GM18951 (cell line): ENCODE measurements at regions of chr2 and their contacts with region 1.

Region 1: DNA sequence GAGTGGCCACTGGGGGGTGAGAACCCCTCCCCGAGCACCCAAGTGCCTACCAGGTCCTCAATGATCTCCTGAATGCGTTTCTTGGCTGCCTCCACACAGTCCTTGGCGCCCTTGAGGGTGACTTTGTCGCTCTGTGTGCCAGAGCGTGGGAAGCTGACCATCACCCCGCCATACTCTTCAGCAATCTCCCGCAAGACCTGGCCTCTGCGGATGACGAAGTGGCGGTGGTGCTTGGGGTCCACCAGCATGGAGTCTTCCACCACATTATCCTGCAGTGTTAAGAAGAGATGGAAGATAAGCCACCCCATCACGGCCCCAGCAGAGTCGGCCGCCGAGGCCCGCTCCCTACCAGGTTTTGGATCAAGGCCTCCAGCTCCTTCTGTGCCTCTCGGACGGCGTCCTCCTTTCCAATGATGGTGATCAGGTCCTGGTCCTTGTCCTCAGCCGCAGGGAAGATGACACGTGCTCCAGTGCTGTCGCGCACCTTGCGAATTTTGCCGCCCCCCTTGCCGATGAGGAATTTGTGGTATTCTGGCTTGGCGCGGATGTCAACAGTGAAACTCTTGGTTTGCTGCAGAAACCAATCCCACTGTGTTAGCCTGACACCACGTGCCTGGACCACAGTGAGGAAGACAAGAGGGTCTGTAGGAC is 51.2 kb downstream of the ANO7 start:
- POLR2A ChIP-seq: no peak

Region 2: DNA sequence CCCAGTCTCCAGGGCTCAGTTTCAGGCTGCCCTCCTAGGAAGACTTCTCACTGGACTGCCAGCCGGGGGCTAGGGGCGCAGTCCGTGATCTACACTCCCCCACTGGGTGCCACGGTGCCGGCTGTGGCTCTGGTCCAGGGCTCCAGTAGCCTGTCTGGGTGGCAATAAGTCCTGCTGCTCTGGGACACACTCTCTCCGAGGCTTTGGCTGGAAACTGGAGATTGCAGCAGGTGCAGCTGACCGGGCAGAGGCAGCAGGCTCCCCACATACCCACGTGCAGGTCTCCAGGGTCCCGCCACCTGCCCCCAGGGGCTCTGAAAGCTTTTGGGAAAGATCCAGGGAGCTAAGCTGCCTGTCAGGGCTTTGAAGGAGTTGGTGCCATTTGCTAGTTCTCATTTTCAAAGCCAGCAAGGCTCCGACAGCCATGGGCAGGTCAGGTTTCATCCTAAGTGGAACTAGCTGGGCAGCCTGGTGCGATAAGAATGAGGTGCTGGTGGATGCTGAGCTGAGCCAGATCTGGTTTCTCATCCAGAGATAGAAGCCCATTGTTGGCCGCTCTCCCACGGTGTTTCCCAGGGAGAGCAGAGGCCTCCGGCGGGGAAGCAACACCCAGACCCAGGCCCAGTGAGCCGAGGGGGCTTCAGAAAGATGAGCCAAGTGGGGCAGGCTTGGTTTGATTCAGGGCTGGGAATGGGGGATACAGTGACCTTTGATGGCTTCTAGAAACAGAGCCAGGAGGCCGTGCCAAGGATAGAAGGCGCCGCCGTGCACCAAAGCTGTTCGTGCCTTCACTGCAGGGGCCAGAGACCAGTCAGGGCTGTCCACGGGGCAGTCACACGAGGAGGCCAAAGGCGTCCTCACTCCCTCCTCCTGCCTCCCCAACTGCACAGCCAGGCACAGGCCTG is 945.9 kb before region 1 on chr2:
- in situ Hi-C with region 1: no loop called
- POLR2A ChIP-seq: no peak

Region 3: DNA sequence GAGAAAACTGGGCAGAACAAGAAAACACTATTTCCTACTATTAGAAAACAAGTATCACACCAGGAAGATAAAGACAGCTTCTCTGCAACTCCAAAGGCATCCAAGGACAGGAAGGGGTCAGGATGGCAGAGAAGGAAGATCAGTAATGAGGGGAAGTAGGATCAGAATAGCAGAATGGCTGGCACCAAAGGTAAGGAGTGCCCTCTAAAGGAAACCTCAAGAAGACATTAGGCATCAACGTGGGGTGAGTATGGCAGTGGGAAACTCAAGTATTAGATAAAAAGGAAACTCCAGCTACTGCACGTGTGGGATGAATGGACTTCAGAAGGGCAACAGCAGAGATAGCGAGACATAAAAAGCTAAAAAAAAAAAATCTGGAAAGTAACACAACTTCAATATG is 49.9 kb after region 1 on chr2:
- in situ Hi-C with region 1: loop called (anchors 5 kb)
- POLR2A ChIP-seq: no peak